GM12878 (cell line): ENCODE measurements at regions of chr19 and their contacts with region 1.

Region 1: DNA sequence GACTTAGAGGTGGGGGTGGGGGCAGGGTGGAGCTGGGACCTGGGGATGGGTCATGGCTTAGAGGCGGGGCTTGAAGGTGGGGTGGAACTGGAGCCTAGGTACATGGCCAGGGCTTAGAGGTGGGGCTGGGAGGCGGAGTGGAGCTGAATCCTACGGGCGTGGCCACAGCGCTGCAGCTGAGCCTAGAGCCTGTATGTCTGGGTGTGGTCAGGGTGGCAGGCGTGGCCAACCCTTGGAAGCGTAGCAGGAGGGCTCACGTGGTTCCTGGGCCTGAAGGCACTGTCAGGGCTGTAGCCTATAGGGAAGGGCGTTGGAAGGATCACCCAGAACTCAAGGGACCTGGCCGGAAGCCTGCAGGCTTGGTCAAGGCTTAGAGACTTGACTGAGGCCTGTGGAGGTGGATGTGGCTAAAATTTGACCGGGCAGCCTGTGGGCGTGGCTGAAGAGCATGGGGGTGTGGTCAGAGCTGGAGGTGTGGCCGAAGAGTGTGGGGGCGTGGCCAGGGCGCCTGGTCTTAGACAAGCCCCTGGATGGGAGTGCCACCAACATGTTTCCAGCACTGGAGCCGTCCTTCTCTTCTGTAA is 24.3 kb downstream of the COLGALT1 start:
- DNase-seq: no peak
- ATAC-seq: peak; percentile 97
- H3K4me3 ChIP-seq: no peak overlapping the region
- H3K27ac ChIP-seq: no peak overlapping the region
- H3K4me1 ChIP-seq: no peaks in the 10 kb centered on the region
- H3K27me3 ChIP-seq: no peaks in the 10 kb centered on the region
- CTCF ChIP-seq: no peak
- EP300 ChIP-seq: no peak
- POLR2A ChIP-seq: no peak; the same call in 1 of the 2 replicates
- RAD21 ChIP-seq: no peak

Region 2: DNA sequence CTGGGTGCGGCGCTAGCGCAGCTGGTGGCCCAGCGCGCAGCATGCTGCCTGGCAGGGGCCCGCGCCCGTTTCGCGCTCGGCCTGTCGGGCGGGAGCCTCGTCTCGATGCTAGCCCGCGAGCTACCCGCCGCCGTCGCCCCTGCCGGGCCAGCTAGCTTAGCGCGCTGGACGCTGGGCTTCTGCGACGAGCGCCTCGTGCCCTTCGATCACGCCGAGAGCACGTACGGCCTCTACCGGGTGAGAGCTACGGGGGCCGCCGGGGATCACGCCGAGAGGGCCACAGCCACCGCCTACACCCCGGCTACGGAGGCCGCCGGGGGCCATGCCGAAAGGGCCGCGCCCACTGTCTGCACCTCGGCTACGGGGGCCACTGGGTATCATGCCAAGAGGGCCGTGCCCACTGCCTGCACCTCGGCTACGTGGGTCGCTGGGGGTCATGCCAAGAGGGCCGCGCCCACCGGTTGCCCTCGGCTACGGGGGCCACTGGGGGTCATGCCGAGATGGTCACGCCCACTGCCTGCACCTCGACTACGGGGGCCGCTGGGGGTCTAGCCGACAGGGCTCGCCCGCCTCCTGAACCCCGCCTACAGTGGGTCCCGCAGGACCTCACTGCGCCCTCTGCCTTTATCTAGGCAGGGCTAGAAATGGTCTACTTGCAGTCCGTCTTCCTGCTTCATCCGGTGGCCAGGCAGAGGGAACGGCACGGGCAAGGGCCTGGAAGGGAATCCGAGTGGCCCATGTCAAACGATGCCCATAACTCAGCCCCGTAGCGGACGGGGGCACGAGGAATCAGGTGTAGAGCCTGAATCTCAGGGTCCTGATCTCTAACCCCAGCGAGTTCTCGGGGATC is 67.8 kb before region 1 on chr19:
- CTCF ChIA-PET with region 1: interaction called, 22 read pairs
- POLR2A ChIA-PET with region 1: no interaction called
- RAD21 ChIA-PET with region 1: no interaction called
- SMC1A ChIA-PET with region 1: no interaction called
- in situ Hi-C with region 1: no loop called
- intact Hi-C with region 1: no loop called
- DNase-seq: peak; percentile 77
- ATAC-seq: peak; percentile 88
- H3K4me3 ChIP-seq: peak overlapping the region; percentile 88
- H3K27ac ChIP-seq: peak overlapping the region; percentile 97
- H3K4me1 ChIP-seq: peaks cover 8% of the 10 kb centered on the region
- H3K27me3 ChIP-seq: no peaks in the 10 kb centered on the region
- CTCF ChIP-seq: peak; percentile 30 to 57 (median 37); a peak in 5 of 6 replicates
- EP300 ChIP-seq: peak; percentile 46 to 64; a peak in 1 of 4 replicates
- POLR2A ChIP-seq: peak; percentile 87
- RAD21 ChIP-seq: peak; percentile 22; the same call in 1 of the 2 replicates

Region 3: DNA sequence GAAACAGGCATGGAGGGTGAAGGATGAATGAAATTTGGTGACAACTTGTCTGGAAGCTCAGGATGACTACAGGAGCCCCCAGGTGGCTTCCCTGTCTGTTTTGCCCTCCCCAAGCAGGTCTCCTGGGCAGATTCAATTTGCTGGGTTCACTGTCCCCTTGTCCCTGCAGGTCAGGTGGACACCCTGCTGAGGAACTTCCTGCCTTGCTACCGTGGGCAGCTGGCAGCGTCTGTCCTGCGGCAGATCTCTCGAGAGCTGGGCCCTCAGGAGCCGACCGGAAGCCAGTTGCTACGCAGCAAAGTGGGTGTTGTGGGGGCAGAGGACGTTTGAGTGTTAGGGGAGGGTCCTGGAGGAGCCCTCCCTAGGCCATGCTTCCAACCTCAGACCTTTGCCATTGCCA is 49.2 kb before region 1 on chr19:
- CTCF ChIA-PET with region 1: interaction called, 14 read pairs
- POLR2A ChIA-PET with region 1: no interaction called
- RAD21 ChIA-PET with region 1: no interaction called
- SMC1A ChIA-PET with region 1: no interaction called
- in situ Hi-C with region 1: no loop called
- intact Hi-C with region 1: no loop called
- DNase-seq: no peak
- ATAC-seq: no peak
- H3K4me3 ChIP-seq: no peak overlapping the region
- H3K27ac ChIP-seq: no peak overlapping the region
- H3K4me1 ChIP-seq: peaks cover 41% of the 10 kb centered on the region
- H3K27me3 ChIP-seq: no peaks in the 10 kb centered on the region
- CTCF ChIP-seq: no peak
- EP300 ChIP-seq: no peak
- POLR2A ChIP-seq: no peak
- RAD21 ChIP-seq: no peak

Region 4: DNA sequence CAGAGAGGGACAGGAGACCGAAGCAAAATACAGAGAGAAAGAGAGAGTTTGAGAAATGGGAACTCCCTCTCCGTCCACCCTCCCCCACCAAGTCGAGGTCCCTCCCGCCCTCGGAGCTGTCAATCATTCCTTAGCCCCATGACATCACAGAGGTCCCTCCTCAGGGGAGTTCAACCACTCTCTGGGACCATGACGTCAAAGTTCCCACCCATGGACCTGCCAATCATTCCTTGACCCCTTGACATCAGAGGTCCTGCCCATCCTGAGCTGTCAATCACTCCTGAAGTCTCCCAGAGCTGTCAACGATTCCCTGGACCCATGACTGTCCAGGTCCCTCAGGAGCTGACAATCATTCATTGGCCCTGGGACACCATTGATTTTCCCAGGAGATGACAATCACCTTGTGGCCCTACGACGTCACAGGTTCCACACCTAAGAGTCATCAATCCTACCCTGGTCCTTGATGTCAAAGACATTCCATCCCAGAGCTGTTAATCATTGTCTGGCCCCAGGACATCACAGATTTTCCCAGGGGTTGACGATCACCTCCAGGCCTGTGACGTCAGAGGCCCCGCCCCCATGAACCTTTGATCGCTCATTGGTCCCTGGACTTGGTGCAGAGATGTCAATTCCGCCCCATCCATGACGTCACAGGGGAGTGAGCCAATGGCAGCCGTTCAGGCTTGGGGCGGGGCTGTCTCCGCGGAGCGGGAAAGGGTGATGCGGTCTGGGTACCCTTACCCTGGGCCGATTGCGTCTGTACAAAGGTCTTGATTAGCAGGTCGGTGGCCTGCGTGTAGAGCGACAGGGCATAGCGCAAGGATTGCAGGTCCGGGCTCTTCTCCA is 37.4 kb after region 1 on chr19:
- CTCF ChIA-PET with region 1: interaction called, 13 read pairs
- POLR2A ChIA-PET with region 1: no interaction called
- RAD21 ChIA-PET with region 1: interaction called, 3 read pairs
- SMC1A ChIA-PET with region 1: no interaction called
- in situ Hi-C with region 1: no loop called
- intact Hi-C with region 1: no loop called
- DNase-seq: no peak
- ATAC-seq: peak; percentile 32; the same call in 2 of the 3 replicates
- H3K4me3 ChIP-seq: peak overlapping the region; percentile 13; the same call in 1 of the 2 replicates
- H3K27ac ChIP-seq: no peak overlapping the region
- H3K4me1 ChIP-seq: no peaks in the 10 kb centered on the region
- H3K27me3 ChIP-seq: no peaks in the 10 kb centered on the region
- CTCF ChIP-seq: no peak
- EP300 ChIP-seq: no peak
- POLR2A ChIP-seq: no peak
- RAD21 ChIP-seq: no peak